Activated CD4-positive, alpha-beta T cell treated with anti-CD3 and anti-CD28 coated beads, Interleukin-2, amount 10 ng/mL, durations not matched to agents 24 days and 14 days (primary cell): ENCODE measurements at regions of chr2 and their contacts with region 1.

Region 1: DNA sequence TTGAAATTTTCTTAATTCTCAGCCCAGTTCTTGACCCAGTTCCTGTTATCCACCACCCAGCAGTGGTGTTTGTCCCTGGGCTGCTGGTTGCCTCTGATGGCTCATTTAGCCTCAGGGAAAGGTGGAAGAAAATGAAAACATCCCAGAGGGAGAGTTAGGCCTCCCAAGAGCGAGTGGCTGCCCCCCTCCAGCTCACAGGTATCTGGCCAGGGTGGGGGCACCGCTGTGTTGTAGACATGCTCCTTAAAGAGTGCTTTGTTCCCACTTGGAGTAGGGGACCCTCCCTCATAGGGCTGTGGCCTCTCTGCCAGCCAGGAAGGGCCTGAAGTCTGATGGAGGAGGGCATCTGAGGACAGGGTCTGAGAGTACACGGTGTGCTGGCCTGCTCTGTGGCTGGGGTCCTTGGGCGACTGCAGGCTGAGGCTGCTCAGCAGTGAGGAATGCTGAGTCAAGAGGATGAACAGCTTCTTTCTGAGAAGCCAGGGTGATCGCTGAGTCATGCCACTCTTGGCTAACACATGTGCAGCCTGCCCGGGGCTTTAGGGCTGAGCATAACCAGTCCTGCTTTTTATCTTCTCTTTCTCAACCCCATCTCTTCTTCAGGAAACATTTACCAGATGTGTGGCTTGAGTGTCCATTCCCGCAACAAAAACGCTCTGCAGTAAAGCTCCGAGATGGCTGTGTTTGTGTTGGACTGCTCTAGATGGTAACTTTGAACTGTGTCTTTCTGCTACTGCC is 72.3 kb downstream of the IL1R2 start:
- DNase-seq: peak; percentile 67
- H3K4me3 Mint-ChIP-seq: no peak overlapping the region
- H3K27ac Mint-ChIP-seq: no peak overlapping the region
- H3K4me1 Mint-ChIP-seq: peaks cover 19% of the 10 kb centered on the region
- H3K27me3 Mint-ChIP-seq: peaks cover 10% of the 10 kb centered on the region

Region 2: GRCh38 chr2:102028470-102028869 is 35.6 kb before region 1 on chr2:
- intact Hi-C with region 1: loop called (anchors 1 kb)
- DNase-seq: no peak
- H3K4me3 Mint-ChIP-seq: no peak overlapping the region
- H3K27ac Mint-ChIP-seq: peak overlapping the region; percentile 39
- H3K4me1 Mint-ChIP-seq: peaks cover 27% of the 10 kb centered on the region
- H3K27me3 Mint-ChIP-seq: peaks cover 2% of the 10 kb centered on the region

Region 3: DNA sequence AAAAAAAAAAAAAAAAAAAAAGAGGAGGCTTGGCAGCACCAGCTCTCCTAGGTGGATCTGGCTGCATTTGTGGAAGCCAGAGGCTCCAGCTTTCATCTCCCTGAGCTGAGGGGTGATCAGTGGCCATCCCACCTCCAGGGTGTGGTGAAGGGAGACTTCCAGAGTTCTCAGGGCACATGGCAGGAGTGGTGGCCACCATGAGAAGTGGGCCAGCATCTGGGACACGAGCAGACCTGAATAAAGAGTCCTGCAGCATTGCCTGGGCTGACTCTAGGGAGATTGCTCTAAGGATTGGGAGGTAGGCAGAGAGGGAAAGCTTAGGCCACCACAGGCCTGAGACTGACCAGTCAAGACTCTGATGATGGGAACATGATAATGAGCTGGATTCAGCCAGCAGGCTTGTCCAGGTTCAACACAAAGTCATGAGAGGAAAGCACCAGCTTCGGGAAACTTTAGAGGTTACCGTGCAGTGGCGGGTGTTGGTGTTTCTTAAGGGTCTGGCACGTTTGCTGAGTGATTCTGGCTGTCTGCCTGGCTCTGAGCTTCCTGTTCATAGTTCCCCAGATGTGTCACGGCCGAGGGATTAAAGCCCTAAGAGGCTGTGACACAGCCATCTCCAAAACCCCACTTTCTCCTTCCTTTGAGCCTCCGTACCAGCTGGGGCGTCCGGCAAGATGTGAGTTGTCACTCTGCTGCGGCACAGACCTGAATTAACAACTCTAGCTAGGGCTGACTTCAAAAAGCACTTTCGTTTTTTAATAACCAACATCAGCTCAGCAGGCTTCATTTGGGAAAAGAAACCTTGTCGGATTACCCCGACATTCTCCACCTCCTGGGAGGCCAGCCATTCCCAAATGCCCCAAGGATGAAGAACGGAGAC is 40.1 kb after region 1 on chr2:
- intact Hi-C with region 1: loop called (anchors 2 kb)
- DNase-seq: peak; percentile 76
- H3K4me3 Mint-ChIP-seq: peak overlapping the region; percentile 79
- H3K27ac Mint-ChIP-seq: peak overlapping the region; percentile 14
- H3K4me1 Mint-ChIP-seq: peaks cover 22% of the 10 kb centered on the region
- H3K27me3 Mint-ChIP-seq: peaks cover 35% of the 10 kb centered on the region